ENCODE measurements at regions of chr1 and their contacts with region 1.

Region 1: GRCh38 chr1:153990468-153991150 is at the start of gene RPS27:
- DNase-seq: peak; percentile 85 to 98
- ATAC-seq: peak; percentile 88 to 95 (median 89)
- H3K4me3 ChIP-seq: peak within 1 kb of the TSS; percentile 84
- H3K4me3 Mint-ChIP-seq: peak within 1 kb of the TSS; percentile 94
- H3K27ac ChIP-seq: peak within 1 kb of the TSS; percentile 95
- H3K27ac Mint-ChIP-seq: peak within 1 kb of the TSS; percentile 98 to 99
- H3K4me1 ChIP-seq: peaks cover 43% of the 10 kb centered on the region
- H3K4me1 Mint-ChIP-seq: peaks cover 47 to 48% of the 10 kb centered on the region in 2 donors
- H3K27me3 ChIP-seq: peaks cover 2% of the 10 kb centered on the region
- H3K27me3 Mint-ChIP-seq: peaks cover 5 to 7% of the 10 kb centered on the region in 2 donors
- CTCF ChIP-seq: no peak
- total RNA-seq, gene RPS27: 2,073 to 2,763 (median 2,323) TPM

Region 2: DNA sequence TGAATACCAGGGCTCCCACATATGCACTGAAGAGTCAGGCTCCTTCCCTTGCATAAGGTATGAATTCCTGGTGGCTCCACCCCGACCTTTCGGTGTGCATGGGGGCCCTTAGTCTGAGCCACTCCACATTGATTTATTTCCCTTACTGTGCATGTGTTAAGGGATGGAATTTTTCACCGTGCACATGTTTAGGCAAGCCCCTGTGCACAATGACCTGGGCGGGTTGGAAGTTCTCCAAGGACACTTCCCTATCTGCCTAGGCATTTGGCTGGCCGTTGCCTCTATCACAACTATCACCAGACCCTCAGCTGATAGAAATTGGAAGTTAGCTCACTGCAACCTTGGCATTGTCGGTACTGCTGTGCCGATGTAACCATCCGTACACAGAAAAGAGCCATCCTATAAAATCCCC is 464.5 kb before region 1 on chr1:
- intact Hi-C with region 1: no loop called
- DNase-seq: no peak
- ATAC-seq: no peak
- H3K4me3 ChIP-seq: no peak overlapping the region
- H3K4me3 Mint-ChIP-seq: no peak overlapping the region
- H3K27ac ChIP-seq: no peak overlapping the region
- H3K27ac Mint-ChIP-seq: no peak overlapping the region
- H3K4me1 ChIP-seq: no peaks in the 10 kb centered on the region
- H3K4me1 Mint-ChIP-seq: peaks cover 0 to 5% of the 10 kb centered on the region in 2 donors
- H3K27me3 ChIP-seq: no peaks in the 10 kb centered on the region
- H3K27me3 Mint-ChIP-seq: no peaks in the 10 kb centered on the region
- CTCF ChIP-seq: no peak

Region 3: GRCh38 chr1:153633716-153634665 is 356.6 kb before region 1 on chr1 and contains the start of gene CHTOP:
- intact Hi-C with region 1: loop called (anchors 5 kb)
- DNase-seq: peak; percentile 98 to 99
- ATAC-seq: peak; percentile 86 to 97 (median 88)
- H3K4me3 ChIP-seq: peak within 1 kb of the TSS; percentile 72
- H3K4me3 Mint-ChIP-seq: peak within 1 kb of the TSS; percentile 99
- H3K27ac ChIP-seq: peak within 1 kb of the TSS; percentile 91
- H3K27ac Mint-ChIP-seq: peak within 1 kb of the TSS; percentile 98 to 99
- H3K4me1 ChIP-seq: peaks cover 24% of the 10 kb centered on the region
- H3K4me1 Mint-ChIP-seq: peaks cover 24 to 34% of the 10 kb centered on the region in 2 donors
- H3K27me3 ChIP-seq: no peaks in the 10 kb centered on the region
- H3K27me3 Mint-ChIP-seq: no peaks in the 10 kb centered on the region
- CTCF ChIP-seq: no peak
- total RNA-seq, gene CHTOP: 94.7 to 110 (median 106) TPM

Region 4: GRCh38 chr1:153796791-153797659 is 193.6 kb before region 1 on chr1:
- intact Hi-C with region 1: loop called (anchors 1 kb)
- DNase-seq: peak; percentile 76 to 92
- ATAC-seq: peak; percentile 80 to 95 (median 82)
- H3K4me3 ChIP-seq: no peak overlapping the region
- H3K4me3 Mint-ChIP-seq: peak overlapping the region; percentile 56
- H3K27ac ChIP-seq: no peak overlapping the region
- H3K27ac Mint-ChIP-seq: peak overlapping the region in 1 of 2 donors; percentile 79
- H3K4me1 ChIP-seq: peaks cover 44% of the 10 kb centered on the region
- H3K4me1 Mint-ChIP-seq: peaks cover 30 to 49% of the 10 kb centered on the region in 2 donors
- H3K27me3 ChIP-seq: no peaks in the 10 kb centered on the region
- H3K27me3 Mint-ChIP-seq: no peaks in the 10 kb centered on the region
- CTCF ChIP-seq: peak; percentile 82

Region 5: DNA sequence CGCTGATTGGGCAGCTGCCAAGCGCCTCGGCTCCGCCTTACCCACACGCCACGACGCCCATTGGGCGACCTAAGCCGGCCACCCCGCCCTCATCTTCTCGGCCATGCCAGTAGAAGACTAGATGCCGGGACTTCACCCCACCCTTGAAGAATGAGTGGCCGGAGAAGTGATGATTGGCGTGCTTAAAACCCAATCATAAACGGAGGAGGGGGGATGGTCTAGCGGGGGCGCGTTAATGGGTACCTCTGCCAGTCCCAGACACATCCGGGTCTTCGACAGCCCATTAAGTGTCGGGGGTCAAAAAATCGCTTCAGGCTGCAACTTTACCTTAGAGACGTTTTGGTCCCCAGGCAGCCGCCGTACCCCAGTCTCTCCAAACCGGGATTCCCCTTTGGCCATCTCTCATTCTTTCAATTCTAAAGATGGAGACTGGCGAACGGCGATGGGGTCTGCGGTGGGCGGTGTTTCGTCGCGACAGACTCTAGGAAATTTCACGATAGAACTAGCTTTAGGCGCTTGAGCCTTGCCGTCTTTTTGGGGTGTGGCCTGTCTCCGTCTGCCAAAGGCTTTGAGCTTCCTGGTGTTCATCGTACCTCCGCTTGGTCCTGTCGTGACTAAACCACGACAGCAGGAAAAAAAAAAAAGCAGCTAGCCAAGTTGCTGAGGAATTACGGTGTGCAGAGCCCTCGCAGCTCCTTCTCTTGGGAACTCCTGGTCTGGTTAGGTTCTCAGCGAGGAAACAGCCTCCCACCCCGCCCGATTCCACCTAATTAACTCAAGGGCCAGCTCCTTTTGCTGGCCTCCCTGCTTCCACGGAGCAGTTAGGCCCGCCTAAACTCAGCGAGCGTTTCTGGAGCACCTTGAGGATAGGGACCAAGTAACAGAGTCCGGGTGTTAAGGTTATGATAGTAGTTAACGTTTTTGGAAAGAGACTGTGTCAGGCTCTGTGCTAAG is 67.4 kb before region 1 on chr1 and contains the start of gene GATAD2B:
- intact Hi-C with region 1: loop called (anchors 2 kb)
- DNase-seq: peak; percentile 95 to 100
- ATAC-seq: peak; percentile 86 to 98 (median 91)
- H3K4me3 ChIP-seq: peak within 1 kb of the TSS; percentile 86
- H3K4me3 Mint-ChIP-seq: peak within 1 kb of the TSS; percentile 95
- H3K27ac ChIP-seq: peak within 1 kb of the TSS; percentile 93
- H3K27ac Mint-ChIP-seq: peak within 1 kb of the TSS; percentile 96 to 97
- H3K4me1 ChIP-seq: peaks cover 34% of the 10 kb centered on the region
- H3K4me1 Mint-ChIP-seq: peaks cover 52 to 53% of the 10 kb centered on the region in 2 donors
- H3K27me3 ChIP-seq: no peaks in the 10 kb centered on the region
- H3K27me3 Mint-ChIP-seq: no peaks in the 10 kb centered on the region
- CTCF ChIP-seq: no peak
- total RNA-seq, gene GATAD2B: 68.1 to 91.3 (median 75.5) TPM

Region 6: GRCh38 chr1:153967082-153968000 is 23.3 kb before region 1 on chr1 and contains the start of gene CREB3L4:
- intact Hi-C with region 1: loop called (anchors 1 kb)
- DNase-seq: peak; percentile 77 to 95
- ATAC-seq: peak; percentile 82 to 95 (median 87)
- H3K4me3 ChIP-seq: peak within 1 kb of the TSS; percentile 93
- H3K4me3 Mint-ChIP-seq: peak within 1 kb of the TSS; percentile 99
- H3K27ac ChIP-seq: peak within 1 kb of the TSS; percentile 96
- H3K27ac Mint-ChIP-seq: peak within 1 kb of the TSS; percentile 95 to 98
- H3K4me1 ChIP-seq: peaks cover 47% of the 10 kb centered on the region
- H3K4me1 Mint-ChIP-seq: peaks cover 53 to 58% of the 10 kb centered on the region in 2 donors
- H3K27me3 ChIP-seq: no peaks in the 10 kb centered on the region
- H3K27me3 Mint-ChIP-seq: no peaks in the 10 kb centered on the region
- CTCF ChIP-seq: peak; percentile 36
- total RNA-seq, gene CREB3L4: 10.8 to 16.8 (median 10.9) TPM

Region 7: DNA sequence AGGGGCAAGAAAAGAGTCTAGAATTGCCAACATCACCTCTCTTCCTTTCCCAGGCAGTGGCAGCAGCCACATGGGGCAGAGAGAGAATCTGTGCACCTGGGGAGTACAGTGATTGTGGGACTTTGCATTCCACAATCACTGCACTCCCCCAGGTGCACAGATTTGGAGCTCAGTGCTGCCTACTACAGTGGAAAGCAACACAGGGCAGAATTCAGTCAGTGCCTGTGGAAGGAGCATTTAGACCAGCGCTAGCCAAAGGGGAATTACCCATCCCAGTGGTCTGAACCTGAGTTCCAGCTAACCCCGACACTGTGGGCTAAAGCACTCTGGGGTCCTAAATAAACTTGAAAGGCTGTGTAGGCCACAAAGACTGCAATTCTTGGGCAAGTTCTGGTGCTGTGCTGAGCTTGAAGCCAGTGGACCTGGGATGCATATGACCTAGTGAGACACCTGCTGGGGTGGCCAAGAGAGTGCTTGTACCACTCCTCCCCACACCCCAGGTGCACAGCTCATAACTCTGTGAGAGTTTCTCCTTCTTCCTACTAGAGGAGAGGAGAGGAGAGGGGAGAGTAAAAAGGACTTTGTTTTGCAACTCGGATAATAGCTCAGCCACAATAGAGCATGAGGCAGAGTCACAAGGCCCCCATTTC is 113.9 kb after region 1 on chr1:
- intact Hi-C with region 1: no loop called
- DNase-seq: peak in 1 of 2 donors; percentile 8
- ATAC-seq: no peak
- H3K4me3 ChIP-seq: no peak overlapping the region
- H3K4me3 Mint-ChIP-seq: no peak overlapping the region
- H3K27ac ChIP-seq: no peak overlapping the region
- H3K27ac Mint-ChIP-seq: no peak overlapping the region
- H3K4me1 ChIP-seq: no peaks in the 10 kb centered on the region
- H3K4me1 Mint-ChIP-seq: no peaks in the 10 kb centered on the region
- H3K27me3 ChIP-seq: no peaks in the 10 kb centered on the region
- H3K27me3 Mint-ChIP-seq: peaks cover 0 to 2% of the 10 kb centered on the region in 2 donors
- CTCF ChIP-seq: no peak

Region 8: GRCh38 chr1:154272217-154272998 is 281.8 kb after region 1 on chr1 and contains the start of gene HAX1:
- intact Hi-C with region 1: loop called (anchors 1 kb)
- DNase-seq: peak; percentile 93 to 99
- ATAC-seq: peak; percentile 89 to 96 (median 91)
- H3K4me3 ChIP-seq: peak within 1 kb of the TSS; percentile 87
- H3K4me3 Mint-ChIP-seq: peak within 1 kb of the TSS; percentile 98
- H3K27ac ChIP-seq: peak within 1 kb of the TSS; percentile 94
- H3K27ac Mint-ChIP-seq: peak within 1 kb of the TSS; percentile 99 to 100
- H3K4me1 ChIP-seq: peaks cover 18% of the 10 kb centered on the region
- H3K4me1 Mint-ChIP-seq: peaks cover 26% of the 10 kb centered on the region in 2 donors
- H3K27me3 ChIP-seq: no peaks in the 10 kb centered on the region
- H3K27me3 Mint-ChIP-seq: no peaks in the 10 kb centered on the region
- CTCF ChIP-seq: peak; percentile 73
- total RNA-seq, gene HAX1: 36.5 to 52.8 (median 40.0) TPM

Measured in natural killer cell (primary cell).